A549 (cell line): ENCODE measurements at regions of chr12 and their contacts with region 1.

Region 1: GRCh38 chr12:90940872-90941499 is 14.0 kb downstream of the CCER1 start:
- DNase-seq: peak; percentile 54 to 76
- ATAC-seq: peak; percentile 89 to 93
- H3K4me3 ChIP-seq: no peak overlapping the region
- H3K27ac ChIP-seq: no peak overlapping the region
- H3K4me1 ChIP-seq: no peaks in the 10 kb centered on the region
- CTCF ChIP-seq: peak; percentile 88
- EP300 ChIP-seq: no peak
- POLR2A ChIP-seq: no peak
- RAD21 ChIP-seq: peak; percentile 80

Region 2: DNA sequence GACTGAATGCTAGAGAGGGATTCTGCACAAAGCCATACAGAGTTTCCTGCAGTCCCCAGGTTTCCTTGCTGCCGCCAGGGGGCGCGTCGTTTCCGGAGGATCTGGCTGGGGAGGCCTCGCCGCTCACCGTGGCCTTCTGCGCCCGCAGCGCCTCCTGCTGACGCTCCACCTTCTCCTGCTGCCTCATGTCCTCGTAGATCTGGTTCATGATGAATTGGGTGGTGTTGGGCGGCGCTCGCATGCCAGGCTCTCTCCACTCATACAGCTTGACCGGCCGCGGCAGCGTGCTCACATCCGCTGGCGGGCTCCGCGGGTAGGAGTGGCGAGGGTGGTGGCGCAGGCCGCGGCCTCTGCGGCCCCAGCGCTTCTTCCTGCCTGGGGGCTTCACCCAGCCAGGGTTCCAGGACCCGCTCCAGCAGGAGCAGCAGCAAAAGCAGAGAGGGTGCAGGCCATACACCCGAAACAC is 13.0 kb after region 1 on chr12:
- CTCF ChIA-PET with region 1: interaction called, 18 read pairs
- POLR2A ChIA-PET with region 1: no interaction called
- DNase-seq: peak in 1 of 2 experiments; percentile 85
- ATAC-seq: peak in 1 of 2 experiments; percentile 96; a peak in 3 of 6 replicates
- H3K4me3 ChIP-seq: no peak overlapping the region
- H3K27ac ChIP-seq: no peak overlapping the region
- H3K4me1 ChIP-seq: peaks cover 7% of the 10 kb centered on the region; the same call in 1 of the 3 replicates
- CTCF ChIP-seq: peak; percentile 29; the same call in 1 of the 3 replicates
- EP300 ChIP-seq: no peak
- POLR2A ChIP-seq: no peak
- RAD21 ChIP-seq: peak in 1 of 2 experiments; percentile 20; a peak in 1 of 5 replicates

Region 3: GRCh38 chr12:90959538-90960139 is 18.7 kb after region 1 on chr12:
- CTCF ChIA-PET with region 1: interaction called, 18 read pairs
- POLR2A ChIA-PET with region 1: no interaction called
- DNase-seq: peak; percentile 29 to 65
- ATAC-seq: peak; percentile 79 to 91; a peak in 4 of 6 replicates
- H3K4me3 ChIP-seq: no peak overlapping the region
- H3K27ac ChIP-seq: no peak overlapping the region
- H3K4me1 ChIP-seq: peaks cover 3% of the 10 kb centered on the region; the same call in 1 of the 3 replicates
- CTCF ChIP-seq: peak; percentile 69
- EP300 ChIP-seq: no peak
- POLR2A ChIP-seq: no peak
- RAD21 ChIP-seq: peak; percentile 49 to 67

Region 4: GRCh38 chr12:91127751-91128150 is 186.8 kb after region 1 on chr12:
- CTCF ChIA-PET with region 1: no interaction called
- POLR2A ChIA-PET with region 1: no interaction called
- DNase-seq: peak in 1 of 2 experiments; percentile 59
- ATAC-seq: peak; percentile 64 to 88; a peak in 5 of 6 replicates
- H3K4me3 ChIP-seq: no peak overlapping the region
- H3K27ac ChIP-seq: peak overlapping the region in 1 of 2 experiments; percentile 7; a peak in 1 of 6 replicates
- H3K4me1 ChIP-seq: peaks cover 18% of the 10 kb centered on the region; the same call in 2 of the 3 replicates
- CTCF ChIP-seq: no peak
- EP300 ChIP-seq: no peak
- POLR2A ChIP-seq: no peak
- RAD21 ChIP-seq: no peak